Psoas muscle (tissue), 8 donors: ENCODE measurements at regions of chr2 and their contacts with region 1.

Region 1: DNA sequence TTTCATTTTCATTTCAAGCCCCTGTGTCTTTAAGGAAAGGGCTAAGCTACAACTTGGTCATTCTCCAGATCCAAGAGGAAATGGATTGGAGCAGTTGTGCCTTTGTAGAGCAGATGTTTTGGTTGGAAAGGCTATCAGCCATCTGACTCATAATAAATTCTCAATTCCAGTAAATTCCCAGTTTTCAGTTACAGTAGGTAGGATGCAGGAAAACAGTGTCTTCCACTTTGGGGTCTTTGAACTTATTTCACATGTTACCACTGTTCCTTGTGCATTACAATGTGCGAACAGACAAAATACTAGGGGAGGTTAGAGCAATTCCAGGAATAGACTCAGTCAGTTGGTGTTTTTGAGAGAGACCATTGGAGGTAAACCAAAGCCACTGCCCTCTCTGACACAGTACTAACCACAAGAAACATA is 211.9 kb downstream of the BABAM2 start:
- DNase-seq: no peak
- ATAC-seq: peak; percentile 74 to 87 (median 82)
- H3K4me3 ChIP-seq: peak overlapping the region; percentile 46
- H3K27ac ChIP-seq: peak overlapping the region; percentile 72
- H3K4me1 ChIP-seq: peaks cover 42% of the 10 kb centered on the region
- H3K27me3 ChIP-seq: no peaks in the 10 kb centered on the region
- CTCF ChIP-seq: no peak

Region 2: DNA sequence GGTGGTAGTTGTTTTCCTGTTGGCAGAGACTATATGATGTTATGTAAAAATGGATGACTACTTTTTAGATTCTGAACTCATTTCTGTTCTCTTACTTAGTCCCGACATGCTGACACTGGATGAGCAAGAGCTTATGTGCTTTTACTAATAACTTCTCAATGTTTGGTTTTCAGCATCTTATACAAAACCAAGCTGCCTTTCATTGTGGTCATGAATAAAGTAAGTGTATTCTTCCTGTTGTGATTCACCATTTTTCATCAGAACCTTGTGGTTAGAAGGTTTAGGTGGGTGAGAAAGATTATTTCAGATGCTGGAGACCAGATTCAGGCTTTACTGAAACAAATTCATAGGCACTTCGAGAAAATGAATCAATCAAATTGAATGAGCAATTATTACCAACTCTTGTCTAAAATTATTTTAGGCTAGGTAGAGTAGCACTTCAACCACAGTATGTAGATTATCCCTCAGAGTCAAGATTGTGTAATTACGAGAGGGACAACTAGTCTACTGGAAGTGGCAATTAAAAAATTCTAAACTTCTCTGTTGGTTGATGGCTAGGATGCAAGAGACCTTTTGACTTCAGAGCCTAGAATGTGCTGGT is 464.3 kb before region 1 on chr2:
- intact Hi-C with region 1: no loop called
- DNase-seq: no peak
- ATAC-seq: no peak
- H3K4me3 ChIP-seq: no peak overlapping the region
- H3K27ac ChIP-seq: no peak overlapping the region
- H3K4me1 ChIP-seq: no peaks in the 10 kb centered on the region
- H3K27me3 ChIP-seq: no peaks in the 10 kb centered on the region
- CTCF ChIP-seq: no peak

Region 3: GRCh38 chr2:28413142-28413898 is 310.9 kb after region 1 on chr2:
- intact Hi-C with region 1: loop called in 1 of 2 experiments (anchors 5 kb)
- DNase-seq: peak; percentile 65 to 86
- ATAC-seq: peak; percentile 59 to 88 (median 70)
- H3K4me3 ChIP-seq: no peak overlapping the region
- H3K27ac ChIP-seq: peak overlapping the region; percentile 80
- H3K4me1 ChIP-seq: peaks cover 34% of the 10 kb centered on the region
- H3K27me3 ChIP-seq: no peaks in the 10 kb centered on the region
- CTCF ChIP-seq: peak; percentile 45